Caco-2 (cell line): ENCODE measurements at regions of chr12 and their contacts with region 1.

Region 1: DNA sequence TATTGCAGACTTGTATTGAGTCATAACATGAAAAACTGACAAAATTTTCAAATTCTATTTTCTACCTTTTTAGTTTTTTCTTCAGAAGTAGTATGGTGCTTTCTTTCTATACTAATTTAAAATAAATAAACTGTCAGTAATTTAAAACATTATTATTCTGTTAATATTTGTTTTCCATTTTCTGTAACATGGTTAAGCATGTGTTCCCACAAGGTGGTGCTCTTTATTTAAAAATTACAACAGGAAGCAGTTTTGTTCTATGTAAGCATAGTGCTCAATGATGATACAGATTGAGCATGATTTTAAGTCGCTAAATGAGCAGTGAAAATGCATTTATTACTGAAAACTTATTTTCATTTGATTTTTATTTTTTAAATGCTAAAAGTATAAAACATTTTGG is 114.6 kb downstream of the PPFIA2 start:
- DNase-seq: peak in 1 of 2 experiments; percentile 22
- H3K4me3 ChIP-seq: no peak overlapping the region
- H3K4me3 Mint-ChIP-seq: no peak overlapping the region
- H3K27ac Mint-ChIP-seq: no peak overlapping the region
- H3K4me1 ChIP-seq: no peaks in the 10 kb centered on the region
- H3K4me1 Mint-ChIP-seq: no peaks in the 10 kb centered on the region
- H3K27me3 ChIP-seq: no peaks in the 10 kb centered on the region
- H3K27me3 Mint-ChIP-seq: no peaks in the 10 kb centered on the region
- CTCF ChIP-seq: peak; percentile 27 to 35

Region 2: DNA sequence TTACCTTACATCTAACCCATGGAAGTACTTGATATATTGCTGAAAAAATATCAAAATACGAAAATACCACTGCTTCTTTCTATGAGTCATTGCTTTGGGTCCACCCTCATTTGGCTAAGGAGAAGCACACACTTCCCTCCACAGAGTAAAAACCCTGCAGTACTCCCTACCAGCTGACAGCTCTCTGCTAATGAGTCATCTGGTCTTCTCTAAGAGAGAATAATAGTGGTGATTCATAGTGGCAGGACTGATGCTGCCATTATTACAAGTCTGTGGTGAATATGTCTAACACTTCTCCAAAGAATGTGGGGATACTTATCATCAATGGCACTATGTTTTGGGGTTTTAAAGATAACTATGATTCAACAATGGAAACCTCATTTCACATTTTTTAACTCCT is 24.0 kb after region 1 on chr12:
- CTCF ChIA-PET with region 1: no interaction called
- POLR2A ChIA-PET with region 1: no interaction called
- intact Hi-C with region 1: no loop called
- DNase-seq: no peak
- H3K4me3 ChIP-seq: no peak overlapping the region
- H3K4me3 Mint-ChIP-seq: no peak overlapping the region
- H3K27ac Mint-ChIP-seq: no peak overlapping the region
- H3K4me1 ChIP-seq: no peaks in the 10 kb centered on the region
- H3K4me1 Mint-ChIP-seq: no peaks in the 10 kb centered on the region
- H3K27me3 ChIP-seq: no peaks in the 10 kb centered on the region
- H3K27me3 Mint-ChIP-seq: no peaks in the 10 kb centered on the region
- CTCF ChIP-seq: no peak

Region 3: GRCh38 chr12:81797100-81797499 is 152.6 kb after region 1 on chr12:
- CTCF ChIA-PET with region 1: no interaction called
- POLR2A ChIA-PET with region 1: no interaction called
- intact Hi-C with region 1: loop called (anchors 2 kb)
- DNase-seq: peak in 1 of 2 experiments; percentile 22
- H3K4me3 ChIP-seq: no peak overlapping the region
- H3K4me3 Mint-ChIP-seq: no peak overlapping the region
- H3K27ac Mint-ChIP-seq: no peak overlapping the region
- H3K4me1 ChIP-seq: no peaks in the 10 kb centered on the region
- H3K4me1 Mint-ChIP-seq: no peaks in the 10 kb centered on the region
- H3K27me3 ChIP-seq: no peaks in the 10 kb centered on the region
- H3K27me3 Mint-ChIP-seq: peaks cover 7% of the 10 kb centered on the region
- CTCF ChIP-seq: peak in 1 of 2 experiments; percentile 39

Region 4: DNA sequence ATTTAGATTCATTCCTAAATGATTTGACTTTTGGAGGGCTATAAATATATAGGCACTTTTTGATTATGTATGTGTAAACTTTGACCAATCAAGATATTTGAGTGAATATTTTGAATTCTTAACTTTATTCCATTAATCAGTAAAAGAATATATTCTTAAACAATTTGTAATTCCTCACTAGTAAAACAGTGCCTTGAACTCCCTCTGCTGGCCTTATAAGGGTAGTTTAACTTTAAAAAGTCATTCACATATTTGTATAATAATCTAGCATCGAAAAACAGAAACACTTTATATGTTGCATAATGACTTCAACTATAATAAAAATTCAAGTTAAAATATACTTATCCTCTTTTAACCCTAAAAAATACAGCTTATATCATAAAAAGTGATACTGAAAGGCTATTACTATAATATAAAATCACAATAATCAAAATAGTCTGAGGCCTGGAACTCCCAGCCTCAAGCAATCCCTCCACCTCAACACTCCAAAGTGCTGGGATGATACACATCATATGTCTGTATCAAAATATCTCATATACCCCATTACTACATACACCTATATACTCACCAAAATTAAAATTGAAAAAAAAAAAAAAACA is 682.5 kb after region 1 on chr12:
- CTCF ChIA-PET with region 1: no interaction called
- POLR2A ChIA-PET with region 1: no interaction called
- intact Hi-C with region 1: loop called (anchors 1 kb)
- DNase-seq: no peak
- H3K4me3 ChIP-seq: no peak overlapping the region
- H3K4me3 Mint-ChIP-seq: no peak overlapping the region
- H3K27ac Mint-ChIP-seq: no peak overlapping the region
- H3K4me1 ChIP-seq: no peaks in the 10 kb centered on the region
- H3K4me1 Mint-ChIP-seq: no peaks in the 10 kb centered on the region
- H3K27me3 ChIP-seq: no peaks in the 10 kb centered on the region
- H3K27me3 Mint-ChIP-seq: no peaks in the 10 kb centered on the region
- CTCF ChIP-seq: peak; percentile 45 to 63

Region 5: DNA sequence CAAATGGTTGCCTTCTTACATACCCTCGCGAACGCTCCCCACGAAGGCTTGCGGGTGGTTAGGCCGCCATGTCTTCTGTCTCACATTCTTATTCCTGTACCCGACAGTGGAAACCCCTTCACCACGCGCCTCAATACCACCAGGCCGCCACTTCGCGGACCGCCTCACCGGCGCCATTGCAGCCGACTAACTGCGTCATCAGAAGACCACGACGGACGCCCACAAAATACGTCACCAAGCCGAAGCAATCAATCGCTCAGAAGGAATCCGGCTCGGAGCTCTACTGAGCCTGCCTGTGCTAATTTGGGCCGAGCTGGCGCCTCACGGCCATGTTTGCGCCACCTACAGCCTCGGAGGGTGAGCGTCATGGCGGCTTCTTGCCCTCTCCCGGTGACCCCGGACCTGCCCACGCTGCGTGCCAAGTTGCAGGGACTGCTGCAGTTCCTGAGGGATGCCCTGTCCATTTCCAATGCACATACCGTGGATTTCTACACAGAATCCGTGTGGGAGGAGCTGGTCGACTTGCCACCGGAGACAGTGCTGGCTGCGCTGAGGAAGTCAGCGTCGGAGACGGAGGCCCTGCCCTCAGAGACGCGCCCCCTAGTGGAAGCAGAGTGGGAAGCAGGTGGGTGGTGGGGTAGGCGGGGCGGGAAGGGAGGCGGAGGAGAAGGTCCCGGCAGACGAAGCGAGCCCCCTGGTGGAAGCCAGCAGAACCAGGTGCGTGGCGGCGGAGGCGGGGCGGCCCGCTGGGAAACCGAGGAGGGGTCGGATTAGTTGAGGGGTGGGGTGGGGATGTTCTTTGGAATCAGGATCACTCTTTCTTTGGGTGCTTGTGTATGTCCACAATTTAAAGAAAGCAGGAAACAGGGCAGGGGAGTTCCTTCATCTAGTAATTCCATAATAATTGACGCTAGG is 714.0 kb after region 1 on chr12 and contains the starts of genes CCDC59 and METTL25:
- CTCF ChIA-PET with region 1: no interaction called
- POLR2A ChIA-PET with region 1: no interaction called
- intact Hi-C with region 1: loop called (anchors 1 kb)
- DNase-seq: peak; percentile 95 to 96
- H3K4me3 ChIP-seq: peak within 1 kb of the TSS; percentile 84
- H3K4me3 Mint-ChIP-seq: peak within 1 kb of the TSS; percentile 99
- H3K27ac Mint-ChIP-seq: peak within 1 kb of the TSS; percentile 100
- H3K4me1 ChIP-seq: no peaks in the 10 kb centered on the region; the same call in 1 of the 2 replicates
- H3K4me1 Mint-ChIP-seq: peaks cover 6% of the 10 kb centered on the region
- H3K27me3 ChIP-seq: no peaks in the 10 kb centered on the region
- H3K27me3 Mint-ChIP-seq: no peaks in the 10 kb centered on the region
- CTCF ChIP-seq: peak; percentile 96 to 97
- total RNA-seq, gene CCDC59: 57.0 and 58.5 TPM in 2 replicates
- total RNA-seq, gene METTL25: 8.0 and 8.4 TPM in 2 replicates

Region 6: DNA sequence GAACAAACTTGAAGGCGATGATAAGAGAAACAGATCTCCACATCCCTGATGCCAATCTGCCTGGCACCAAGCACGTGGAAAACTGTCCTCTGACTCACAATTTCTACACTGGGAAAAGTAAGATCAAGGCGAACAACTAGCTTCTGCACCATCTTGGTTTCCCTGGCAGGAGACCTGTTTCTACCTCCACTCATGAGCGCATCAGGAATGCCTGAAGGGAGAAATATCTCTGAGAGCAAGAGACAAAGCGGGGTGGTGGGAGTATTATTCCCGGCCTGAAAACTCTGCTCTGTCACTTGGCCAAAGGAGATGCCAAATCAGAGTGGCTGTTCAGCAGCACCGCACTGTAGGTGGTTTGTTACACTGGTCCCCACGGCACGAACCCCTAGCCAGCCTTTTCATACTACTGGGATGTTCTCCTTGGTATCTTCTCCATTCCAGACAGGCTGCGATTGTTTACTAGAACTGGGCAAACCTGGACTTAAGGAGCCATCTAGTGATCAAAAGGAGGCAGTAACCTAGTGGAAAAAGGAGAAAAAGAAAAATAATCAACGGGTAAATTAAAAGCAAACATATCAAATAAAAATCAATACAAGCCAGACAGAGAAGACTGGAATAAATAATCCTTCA is 983.2 kb after region 1 on chr12:
- CTCF ChIA-PET with region 1: no interaction called
- POLR2A ChIA-PET with region 1: no interaction called
- intact Hi-C with region 1: loop called (anchors 5 kb)
- DNase-seq: peak in 1 of 2 experiments; percentile 30
- H3K4me3 ChIP-seq: no peak overlapping the region
- H3K4me3 Mint-ChIP-seq: no peak overlapping the region
- H3K27ac Mint-ChIP-seq: no peak overlapping the region
- H3K4me1 ChIP-seq: no peaks in the 10 kb centered on the region
- H3K4me1 Mint-ChIP-seq: no peaks in the 10 kb centered on the region
- H3K27me3 ChIP-seq: no peaks in the 10 kb centered on the region
- H3K27me3 Mint-ChIP-seq: peaks cover 7% of the 10 kb centered on the region
- CTCF ChIP-seq: peak; percentile 51 to 54